Caco-2 (cell line): ENCODE measurements at regions of chr6 and their contacts with region 1.

Region 1: GRCh38 chr6:32868257-32868788 is 14.3 kb downstream of the PSMB9 start:
- DNase-seq: peak; percentile 61 to 73
- H3K4me3 ChIP-seq: no peak overlapping the region
- H3K4me3 Mint-ChIP-seq: no peak overlapping the region
- H3K27ac Mint-ChIP-seq: no peak overlapping the region
- H3K4me1 ChIP-seq: peaks cover 9% of the 10 kb centered on the region; the same call in 1 of the 2 replicates
- H3K4me1 Mint-ChIP-seq: no peaks in the 10 kb centered on the region
- H3K27me3 ChIP-seq: no peaks in the 10 kb centered on the region; the same call in 1 of the 2 replicates
- H3K27me3 Mint-ChIP-seq: peaks cover 15% of the 10 kb centered on the region
- CTCF ChIP-seq: peak; percentile 78 to 83

Region 2: DNA sequence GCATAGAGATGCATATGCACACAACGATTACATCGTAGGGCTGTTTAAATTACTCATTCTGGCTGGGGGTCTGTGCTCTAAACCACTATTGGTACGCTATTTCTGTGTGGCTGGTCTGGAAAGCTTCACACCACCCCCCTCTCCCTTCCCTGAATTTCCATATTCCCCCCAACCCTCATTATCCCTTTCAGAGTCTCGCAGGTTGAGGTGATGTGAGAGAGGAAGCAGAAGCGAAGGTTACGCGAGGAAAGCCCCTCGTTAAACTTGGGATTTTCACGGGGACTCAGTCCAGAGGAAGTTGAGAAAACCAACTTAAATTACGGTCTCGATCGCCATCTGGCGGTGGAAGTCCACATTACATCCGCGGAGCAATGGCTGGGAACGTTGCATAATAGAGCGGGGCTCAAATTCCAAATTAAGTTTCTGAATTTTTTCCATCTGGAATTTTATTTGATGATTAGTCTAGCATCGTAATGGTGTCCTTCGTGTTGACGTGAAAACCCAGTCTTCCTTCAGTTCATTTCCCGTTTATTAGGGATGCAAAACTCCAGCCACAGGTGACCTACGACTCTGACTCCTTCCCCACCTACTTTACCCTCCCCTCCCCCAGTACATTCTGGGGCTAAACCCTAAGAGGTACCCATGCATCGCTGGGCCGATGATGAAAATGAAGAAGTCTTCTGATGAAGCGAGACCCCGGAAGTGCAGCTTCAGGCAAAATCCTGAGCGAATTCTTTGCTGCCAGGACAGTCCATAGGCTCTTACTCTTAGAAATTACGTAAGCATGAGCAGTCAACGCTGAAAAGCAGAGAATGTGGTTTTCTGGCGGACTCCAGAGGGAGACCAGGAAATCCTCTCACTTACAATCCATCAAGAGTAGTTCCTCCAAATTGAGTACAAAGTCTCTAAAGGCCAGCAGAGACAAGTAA is 71.2 kb before region 1 on chr6:
- CTCF ChIA-PET with region 1: interaction called, 3 read pairs
- POLR2A ChIA-PET with region 1: no interaction called
- intact Hi-C with region 1: loop called (anchors 1 kb)
- DNase-seq: peak; percentile 63 to 73
- H3K4me3 ChIP-seq: no peak overlapping the region
- H3K4me3 Mint-ChIP-seq: peak overlapping the region; percentile 56
- H3K27ac Mint-ChIP-seq: no peak overlapping the region
- H3K4me1 ChIP-seq: no peaks in the 10 kb centered on the region
- H3K4me1 Mint-ChIP-seq: no peaks in the 10 kb centered on the region
- H3K27me3 ChIP-seq: no peaks in the 10 kb centered on the region
- H3K27me3 Mint-ChIP-seq: peaks cover 25% of the 10 kb centered on the region
- CTCF ChIP-seq: peak; percentile 72 to 90

Region 3: GRCh38 chr6:32825966-32826365 is 42.4 kb before region 1 on chr6:
- CTCF ChIA-PET with region 1: interaction called, 40 read pairs
- POLR2A ChIA-PET with region 1: no interaction called
- intact Hi-C with region 1: loop called (anchors 1 kb)
- DNase-seq: peak in 1 of 2 experiments; percentile 19
- H3K4me3 ChIP-seq: no peak overlapping the region
- H3K4me3 Mint-ChIP-seq: no peak overlapping the region
- H3K27ac Mint-ChIP-seq: no peak overlapping the region
- H3K4me1 ChIP-seq: no peaks in the 10 kb centered on the region
- H3K4me1 Mint-ChIP-seq: no peaks in the 10 kb centered on the region
- H3K27me3 ChIP-seq: no peaks in the 10 kb centered on the region; the same call in 1 of the 2 replicates
- H3K27me3 Mint-ChIP-seq: peaks cover 3% of the 10 kb centered on the region
- CTCF ChIP-seq: peak; percentile 46 to 59

Region 4: DNA sequence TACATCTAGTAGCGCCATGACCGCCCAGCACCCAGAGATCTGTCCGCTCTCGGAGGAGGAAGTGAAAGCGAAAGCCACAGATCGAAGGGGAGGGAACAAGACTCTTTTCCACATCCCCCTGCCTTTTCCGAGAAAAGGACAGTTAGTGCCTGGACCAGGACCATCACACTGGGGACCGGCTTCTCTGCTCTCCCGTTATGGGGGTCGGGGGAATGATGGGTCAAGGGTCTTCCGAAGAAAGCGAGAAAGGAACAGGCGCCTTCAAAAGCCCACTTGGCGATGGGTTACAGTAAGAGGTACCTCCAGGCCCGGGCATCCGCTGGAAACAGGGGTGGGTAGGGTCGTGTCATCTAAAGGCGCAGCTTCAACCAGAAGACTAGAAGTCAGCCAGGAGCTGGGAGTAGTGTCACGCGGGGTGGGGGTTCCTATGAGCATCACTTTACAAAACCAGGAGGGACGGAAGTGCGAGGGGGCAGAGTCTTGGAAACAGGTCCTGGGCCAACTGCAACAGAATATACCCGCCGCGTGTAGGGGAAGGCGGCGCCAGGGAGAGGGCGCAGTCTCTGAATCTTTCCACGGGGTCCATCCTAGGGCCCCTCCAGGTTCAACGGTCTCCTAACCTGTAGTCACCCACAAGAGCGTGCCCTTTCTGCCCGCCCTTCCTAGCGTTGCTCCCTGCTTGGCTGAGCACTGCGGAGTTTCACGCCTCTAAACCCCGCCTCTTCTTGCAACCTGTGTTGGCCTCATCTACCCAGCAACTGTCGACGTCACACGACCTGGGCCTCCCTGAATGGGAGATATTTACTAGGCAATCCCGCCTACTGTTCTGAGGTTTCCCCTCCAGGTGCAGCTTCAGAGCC is 24.1 kb before region 1 on chr6 and contains the start of gene PSMB8:
- CTCF ChIA-PET with region 1: interaction called, 121 read pairs
- POLR2A ChIA-PET with region 1: no interaction called
- intact Hi-C with region 1: no loop called
- DNase-seq: peak; percentile 89 to 94
- H3K4me3 ChIP-seq: peak within 1 kb of the TSS; percentile 47
- H3K4me3 Mint-ChIP-seq: peak within 1 kb of the TSS; percentile 72
- H3K27ac Mint-ChIP-seq: peak within 1 kb of the TSS; percentile 37
- H3K4me1 ChIP-seq: no peaks in the 10 kb centered on the region; the same call in 1 of the 2 replicates
- H3K4me1 Mint-ChIP-seq: peaks cover 5% of the 10 kb centered on the region
- H3K27me3 ChIP-seq: no peaks in the 10 kb centered on the region; the same call in 1 of the 2 replicates
- H3K27me3 Mint-ChIP-seq: peaks cover 8% of the 10 kb centered on the region
- CTCF ChIP-seq: peak in 1 of 2 experiments; percentile 14
- total RNA-seq, gene PSMB8: 3.7 and 3.9 TPM in 2 replicates

Region 5: GRCh38 chr6:32853541-32854375 is 14.6 kb before region 1 on chr6 and contains the starts of genes PSMB9 and TAP1:
- CTCF ChIA-PET with region 1: interaction called, 23 read pairs
- POLR2A ChIA-PET with region 1: no interaction called
- intact Hi-C with region 1: no loop called
- DNase-seq: peak; percentile 84 to 90
- H3K4me3 ChIP-seq: peak within 1 kb of the TSS; percentile 46
- H3K4me3 Mint-ChIP-seq: peak within 1 kb of the TSS; percentile 88
- H3K27ac Mint-ChIP-seq: peak within 1 kb of the TSS; percentile 73
- H3K4me1 ChIP-seq: peaks cover 6% of the 10 kb centered on the region; the same call in 1 of the 2 replicates
- H3K4me1 Mint-ChIP-seq: peaks cover 16% of the 10 kb centered on the region
- H3K27me3 ChIP-seq: peaks cover 1% of the 10 kb centered on the region
- H3K27me3 Mint-ChIP-seq: peaks cover 26% of the 10 kb centered on the region
- CTCF ChIP-seq: peak; percentile 65 to 85
- total RNA-seq, gene PSMB9: 1.3 TPM in 1 of 2 replicates, not detected in the other
- total RNA-seq, gene TAP1: 2.4 and 3.7 TPM in 2 replicates

Region 6: DNA sequence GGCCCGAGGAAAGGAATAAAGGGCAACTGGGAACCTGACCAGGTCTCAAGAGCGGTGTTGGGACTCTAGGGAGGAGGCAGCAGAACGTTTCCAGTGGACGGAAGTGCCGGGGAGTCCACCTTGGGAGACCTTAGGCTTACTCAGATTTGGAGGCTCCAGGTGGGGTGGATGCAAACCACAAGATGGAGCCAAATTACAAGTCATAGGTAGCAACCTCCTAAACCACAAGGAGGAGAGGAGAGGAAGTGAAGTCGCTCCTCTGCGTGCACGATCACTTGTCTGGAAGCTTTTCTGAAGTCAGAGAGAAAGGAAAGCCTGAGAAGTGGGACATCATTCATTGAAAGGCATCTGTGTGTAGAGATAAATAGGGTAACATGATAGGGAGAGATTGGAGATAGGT is 131.7 kb after region 1 on chr6:
- CTCF ChIA-PET with region 1: no interaction called
- POLR2A ChIA-PET with region 1: no interaction called
- intact Hi-C with region 1: no loop called
- DNase-seq: peak in 1 of 2 experiments; percentile 48
- H3K4me3 ChIP-seq: no peak overlapping the region
- H3K4me3 Mint-ChIP-seq: no peak overlapping the region
- H3K27ac Mint-ChIP-seq: no peak overlapping the region
- H3K4me1 ChIP-seq: no peaks in the 10 kb centered on the region
- H3K4me1 Mint-ChIP-seq: no peaks in the 10 kb centered on the region
- H3K27me3 ChIP-seq: no peaks in the 10 kb centered on the region; the same call in 1 of the 2 replicates
- H3K27me3 Mint-ChIP-seq: peaks cover 28% of the 10 kb centered on the region
- CTCF ChIP-seq: peak; percentile 28 to 56